ENCODE measurements at regions of chr3 and their contacts with region 1.

Region 1: GRCh38 chr3:124688581-124689454 is 41.4 kb upstream of the UMPS start:
- DNase-seq: peak; percentile 69 to 84
- ATAC-seq: peak; percentile 96

Region 2: GRCh38 chr3:124563376-124563775 is 125.4 kb before region 1 on chr3:
- intact Hi-C with region 1: loop called in 1 of 2 experiments (anchors 2 kb)
- DNase-seq: no peak
- ATAC-seq: peak; percentile 72

Measured in left colon (tissue), 2 donors.